HEK293 (cell line): ENCODE measurements at regions of chr16 and their contacts with region 1.

Region 1: GRCh38 chr16:67883872-67884261 is 818 bp upstream of the NRN1L start:
- H3K4me3 ChIP-seq: no peak overlapping the region
- H3K27ac ChIP-seq: no peak overlapping the region
- H3K4me1 ChIP-seq: peaks cover 3% of the 10 kb centered on the region; the same call in 1 of the 2 replicates
- CTCF ChIP-seq: peak; percentile 94

Region 2: DNA sequence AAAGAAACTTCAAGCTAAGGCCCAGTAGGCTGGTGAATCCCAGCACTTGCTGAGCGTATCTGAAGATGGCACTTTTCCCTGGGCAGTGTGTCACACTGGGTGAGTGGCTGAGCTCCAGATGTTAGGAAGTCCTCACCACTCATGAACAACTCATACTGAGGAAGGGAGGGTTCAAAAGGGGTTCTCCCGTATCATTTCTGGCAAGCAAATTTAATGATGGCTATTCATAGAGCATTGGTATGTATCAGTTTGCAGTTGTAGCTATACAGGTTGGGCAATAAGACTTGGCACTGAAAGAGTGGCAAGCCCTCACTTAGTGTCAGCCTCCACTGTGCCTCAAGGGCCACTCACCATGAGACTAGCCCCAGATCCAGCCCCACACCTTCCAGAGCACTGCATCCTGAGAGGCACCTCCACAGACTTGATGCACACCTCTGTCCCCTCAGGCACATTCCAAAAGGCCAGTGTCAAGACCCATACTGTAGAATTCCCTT is 175.5 kb before region 1 on chr16:
- CTCF ChIA-PET with region 1: no interaction called
- POLR2A ChIA-PET with region 1: no interaction called
- H3K4me3 ChIP-seq: no peak overlapping the region
- H3K27ac ChIP-seq: 0 out of 2 replicates have a peak overlapping the region, but pooled peaks have one; percentile 16
- H3K4me1 ChIP-seq: peaks cover 4% of the 10 kb centered on the region; the same call in 1 of the 2 replicates
- CTCF ChIP-seq: no peak

Region 3: DNA sequence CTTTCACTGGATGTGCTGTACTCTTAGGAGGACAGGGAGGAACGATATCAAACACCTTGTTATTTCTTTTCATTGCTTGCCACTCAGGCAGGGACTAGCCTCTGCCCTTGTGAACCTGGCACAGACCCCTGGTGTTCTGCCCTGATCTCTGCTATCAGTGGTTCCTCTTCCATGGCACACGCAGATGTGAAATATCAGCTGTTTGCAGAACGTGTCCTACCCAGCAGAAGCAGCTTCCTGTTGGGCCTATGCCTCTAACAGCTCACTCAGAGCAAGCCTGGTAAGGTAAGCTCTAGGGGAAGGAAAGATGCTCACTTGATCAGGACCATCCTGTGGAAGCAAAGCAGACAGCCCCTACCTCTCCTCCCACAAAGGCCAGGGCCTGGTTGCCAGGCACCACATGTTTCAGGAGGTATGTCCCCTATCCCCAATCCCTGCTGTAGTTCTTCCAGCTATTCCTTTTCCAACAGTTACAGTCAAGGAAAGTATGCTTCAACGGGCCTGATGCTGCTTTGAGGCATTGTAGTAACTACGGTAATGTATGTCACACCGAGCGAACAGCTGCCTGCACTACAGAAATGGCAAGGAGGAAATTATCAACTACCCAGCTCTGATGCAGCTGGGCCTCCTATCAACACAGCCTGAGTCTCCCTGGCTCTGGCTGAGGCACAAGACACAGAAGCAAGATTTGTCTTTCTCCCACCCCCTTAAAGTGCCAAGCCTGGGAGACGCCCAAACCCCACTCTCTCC is 123.5 kb before region 1 on chr16:
- CTCF ChIA-PET with region 1: no interaction called
- POLR2A ChIA-PET with region 1: no interaction called
- H3K4me3 ChIP-seq: no peak overlapping the region
- H3K27ac ChIP-seq: no peak overlapping the region
- H3K4me1 ChIP-seq: no peaks in the 10 kb centered on the region
- CTCF ChIP-seq: no peak

Region 4: GRCh38 chr16:67872786-67873537 is 10.9 kb before region 1 on chr16 and contains the start of gene EDC4:
- CTCF ChIA-PET with region 1: interaction called, 12 read pairs
- POLR2A ChIA-PET with region 1: interaction called, 4 read pairs
- H3K4me3 ChIP-seq: peak within 1 kb of the TSS; percentile 79
- H3K27ac ChIP-seq: peak within 1 kb of the TSS; percentile 63; the same call in 1 of the 2 replicates
- H3K4me1 ChIP-seq: no peaks in the 10 kb centered on the region
- CTCF ChIP-seq: peak; percentile 6; the same call in 1 of the 2 replicates

Region 5: DNA sequence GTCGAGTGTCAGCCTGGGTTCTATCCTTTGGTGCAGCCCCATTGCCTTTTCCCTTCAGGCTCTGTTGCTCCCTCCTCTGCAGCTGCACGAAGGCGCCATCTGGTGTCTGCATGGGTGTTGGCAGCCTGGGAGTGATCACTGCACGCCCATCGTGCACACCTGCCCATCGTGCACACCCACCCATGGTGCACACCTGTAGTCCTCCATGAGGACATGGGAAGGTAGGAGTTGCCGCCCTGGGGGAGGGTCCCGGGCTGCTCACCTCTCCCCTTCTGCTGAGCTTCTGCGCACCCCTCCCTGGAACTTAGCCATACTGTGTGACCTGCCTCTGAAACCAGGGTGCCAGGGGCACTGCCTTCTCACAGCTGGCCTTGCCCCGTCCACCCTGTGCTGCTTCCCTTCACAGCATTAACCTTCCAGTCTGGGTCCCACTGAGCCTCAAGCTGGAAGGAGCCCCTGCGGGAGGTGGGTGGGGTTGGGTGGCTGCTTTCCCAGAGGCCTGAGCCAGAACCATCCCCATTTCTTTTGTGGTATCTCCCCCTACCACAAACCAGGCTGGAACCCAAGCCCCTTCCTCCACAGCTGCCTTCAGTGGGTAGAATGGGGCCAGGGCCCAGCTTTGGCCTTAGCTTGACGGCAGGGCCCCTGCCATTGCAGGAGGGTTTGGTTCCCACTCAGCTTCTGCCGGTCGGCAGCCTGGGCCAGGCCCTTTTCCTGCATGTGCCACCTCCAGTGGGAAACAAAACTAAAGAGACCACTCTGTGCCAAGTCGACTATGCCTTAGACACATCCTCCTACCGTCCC is 44.9 kb after region 1 on chr16:
- CTCF ChIA-PET with region 1: interaction called, 62 read pairs
- POLR2A ChIA-PET with region 1: interaction called, 3 read pairs
- H3K4me3 ChIP-seq: no peak overlapping the region
- H3K27ac ChIP-seq: no peak overlapping the region
- H3K4me1 ChIP-seq: peaks cover 10% of the 10 kb centered on the region; the same call in 1 of the 2 replicates
- CTCF ChIP-seq: peak; percentile 92

Region 6: DNA sequence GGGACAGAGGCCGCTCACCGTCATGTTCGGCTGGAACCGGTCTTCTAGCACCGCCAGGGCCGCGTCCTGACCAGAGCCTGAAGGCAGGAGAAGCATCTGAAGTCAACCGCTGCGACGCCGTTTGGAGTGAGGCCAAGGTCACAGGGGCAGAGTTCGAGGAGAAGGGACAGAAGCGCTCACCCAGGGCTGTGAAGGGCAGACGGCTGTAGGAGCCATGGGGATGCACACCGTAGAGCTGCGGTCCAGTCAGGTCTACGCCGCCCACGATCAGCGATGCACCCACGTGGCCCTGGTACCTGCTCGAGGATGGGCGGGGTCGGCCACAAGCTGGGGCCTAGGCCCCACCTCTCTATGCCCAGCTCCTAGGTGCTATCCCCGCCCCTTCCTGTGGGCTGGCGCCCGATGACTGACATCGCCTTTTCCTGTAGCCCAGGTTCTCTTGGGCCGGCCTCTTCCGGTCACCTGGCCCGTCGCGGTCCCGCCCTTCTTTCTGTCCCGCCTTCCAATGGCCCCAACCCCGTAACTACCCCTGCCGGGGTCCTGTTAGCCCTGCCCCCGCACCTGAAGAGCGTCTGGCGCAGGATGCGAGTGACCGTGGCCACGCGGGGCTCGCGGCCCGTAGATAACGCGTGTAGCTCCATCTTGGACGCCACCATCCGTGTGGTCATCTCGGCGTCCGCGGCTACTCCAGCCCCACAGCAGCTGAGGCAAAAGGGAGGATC is 51.7 kb after region 1 on chr16:
- CTCF ChIA-PET with region 1: interaction called, 17 read pairs
- POLR2A ChIA-PET with region 1: interaction called, 16 read pairs
- H3K4me3 ChIP-seq: peak overlapping the region; percentile 92
- H3K27ac ChIP-seq: peak overlapping the region; percentile 69
- H3K4me1 ChIP-seq: no peaks in the 10 kb centered on the region
- CTCF ChIP-seq: peak; percentile 18; the same call in 1 of the 2 replicates